ENCODE measurements at regions of chr4 and their contacts with region 1.

Region 1: DNA sequence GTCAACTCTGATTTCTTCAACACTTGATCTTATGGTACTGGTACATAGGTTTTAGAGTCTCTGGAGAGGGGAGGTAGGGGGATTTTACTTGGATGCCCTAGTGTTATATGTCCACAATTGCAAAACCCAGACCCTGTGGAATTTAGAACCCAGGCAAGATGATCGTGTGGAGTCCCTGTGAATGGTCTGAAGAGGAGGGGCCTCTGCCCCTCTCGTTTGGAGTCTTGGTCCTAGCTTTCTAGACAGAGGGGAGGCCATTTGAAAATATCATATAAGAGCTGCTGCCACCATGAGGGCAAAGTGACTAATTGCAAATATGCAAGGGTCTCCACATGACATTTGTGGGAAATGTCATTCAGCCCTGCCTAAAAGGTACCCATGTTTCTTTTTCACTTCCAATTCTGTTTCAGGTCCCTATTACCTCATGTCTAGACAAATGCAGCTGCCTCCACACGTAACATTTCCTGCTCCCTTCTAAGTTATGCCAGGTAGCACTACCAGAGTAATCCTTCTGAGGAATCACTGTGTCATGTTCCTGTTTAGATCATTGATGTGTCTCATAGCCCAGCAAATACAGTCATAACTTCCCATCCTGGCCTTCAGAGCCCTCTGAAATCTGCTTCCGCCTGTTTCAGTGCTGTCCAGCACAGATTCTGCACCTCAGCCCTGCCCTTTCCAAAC is 126.8 kb downstream of the KLHL8 start:
- DNase-seq: peak; percentile 57
- ATAC-seq: peak; percentile 90
- H3K4me3 Mint-ChIP-seq: no peak overlapping the region
- H3K27ac Mint-ChIP-seq: peak overlapping the region; percentile 36
- H3K4me1 Mint-ChIP-seq: peaks cover 29% of the 10 kb centered on the region
- H3K27me3 Mint-ChIP-seq: no peaks in the 10 kb centered on the region
- CTCF ChIP-seq: peak; percentile 69

Region 2: DNA sequence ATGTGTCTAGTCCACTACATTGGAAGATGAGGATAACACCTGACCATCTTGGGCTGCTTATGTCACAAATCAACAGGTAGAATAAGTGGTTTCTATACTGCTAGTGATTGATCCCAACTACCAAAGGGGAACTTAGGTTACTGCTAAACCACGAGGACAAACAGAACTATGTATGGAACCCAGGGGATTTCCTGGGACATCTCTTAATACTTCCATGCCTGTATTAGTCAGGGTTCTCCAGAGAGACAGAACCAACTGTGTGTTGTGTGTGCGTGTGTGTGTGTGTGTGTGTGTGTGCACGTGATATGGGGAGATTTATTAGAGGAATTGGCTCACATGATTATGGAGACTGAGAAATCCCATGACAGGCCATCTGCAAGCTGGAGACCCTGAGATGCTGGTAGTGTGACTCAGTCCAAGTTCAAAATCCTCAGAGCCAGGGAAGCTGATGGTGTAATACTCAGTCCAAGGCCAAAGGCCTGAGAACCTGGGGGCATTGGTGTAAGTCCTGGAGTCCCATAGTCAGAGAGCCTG is 175.0 kb before region 1 on chr4:
- CTCF ChIA-PET with region 1: interaction called, 140 read pairs
- POLR2A ChIA-PET with region 1: interaction called, 4 read pairs
- intact Hi-C with region 1: loop called (anchors 1 kb)
- DNase-seq: no peak
- ATAC-seq: no peak
- H3K4me3 Mint-ChIP-seq: no peak overlapping the region
- H3K27ac Mint-ChIP-seq: no peak overlapping the region
- H3K4me1 Mint-ChIP-seq: no peaks in the 10 kb centered on the region
- H3K27me3 Mint-ChIP-seq: no peaks in the 10 kb centered on the region
- CTCF ChIP-seq: no peak

Region 3: GRCh38 chr4:86934771-86935565 is 158.6 kb before region 1 on chr4 and contains the start of gene AFF1:
- CTCF ChIA-PET with region 1: interaction called, 18 read pairs
- POLR2A ChIA-PET with region 1: interaction called, 3 read pairs
- intact Hi-C with region 1: loop called (anchors 5 kb)
- DNase-seq: peak; percentile 92
- ATAC-seq: peak; percentile 83
- H3K4me3 Mint-ChIP-seq: peak within 1 kb of the TSS; percentile 90
- H3K27ac Mint-ChIP-seq: peak within 1 kb of the TSS; percentile 95
- H3K4me1 Mint-ChIP-seq: peaks cover 43% of the 10 kb centered on the region
- H3K27me3 Mint-ChIP-seq: no peaks in the 10 kb centered on the region
- CTCF ChIP-seq: peak; percentile 38
- total RNA-seq, gene AFF1: 40.3 to 45.4 TPM

Region 4: GRCh38 chr4:87006676-87007527 is 86.7 kb before region 1 on chr4:
- CTCF ChIA-PET with region 1: interaction called, 23 read pairs
- POLR2A ChIA-PET with region 1: interaction called, 5 read pairs
- intact Hi-C with region 1: loop called (anchors 5 kb)
- DNase-seq: peak; percentile 90
- ATAC-seq: peak; percentile 84
- H3K4me3 Mint-ChIP-seq: peak overlapping the region; percentile 90
- H3K27ac Mint-ChIP-seq: peak overlapping the region; percentile 93
- H3K4me1 Mint-ChIP-seq: peaks cover 47% of the 10 kb centered on the region
- H3K27me3 Mint-ChIP-seq: no peaks in the 10 kb centered on the region
- CTCF ChIP-seq: peak; percentile 49

Region 5: DNA sequence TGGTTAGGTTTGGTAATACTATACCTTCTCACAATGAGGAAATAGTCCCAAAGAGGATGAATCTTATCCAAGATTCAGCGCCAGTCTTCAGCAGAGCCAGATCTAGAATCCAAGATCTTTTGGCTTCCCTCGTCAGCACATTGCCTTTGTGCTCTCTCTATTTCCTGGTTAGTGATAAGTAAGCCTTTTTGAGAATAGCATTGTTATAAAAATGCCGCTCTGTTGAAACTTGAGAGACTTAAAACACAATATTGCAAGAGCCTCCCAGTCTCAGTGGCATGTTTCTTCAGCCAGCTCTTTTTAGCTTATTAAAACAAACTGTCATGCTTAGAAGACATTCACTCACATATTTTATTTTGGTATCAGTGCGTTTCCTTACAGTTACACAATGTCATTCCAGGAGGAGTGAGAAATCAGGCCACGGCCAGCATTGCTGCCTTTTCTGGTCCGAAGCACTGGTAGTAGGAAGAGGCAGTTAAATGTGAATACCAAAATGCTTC is 14.5 kb before region 1 on chr4:
- CTCF ChIA-PET with region 1: interaction called, 17 read pairs
- POLR2A ChIA-PET with region 1: interaction called, 3 read pairs
- intact Hi-C with region 1: no loop called
- DNase-seq: no peak
- ATAC-seq: no peak
- H3K4me3 Mint-ChIP-seq: no peak overlapping the region
- H3K27ac Mint-ChIP-seq: no peak overlapping the region
- H3K4me1 Mint-ChIP-seq: peaks cover 31% of the 10 kb centered on the region
- H3K27me3 Mint-ChIP-seq: no peaks in the 10 kb centered on the region
- CTCF ChIP-seq: no peak

Region 6: DNA sequence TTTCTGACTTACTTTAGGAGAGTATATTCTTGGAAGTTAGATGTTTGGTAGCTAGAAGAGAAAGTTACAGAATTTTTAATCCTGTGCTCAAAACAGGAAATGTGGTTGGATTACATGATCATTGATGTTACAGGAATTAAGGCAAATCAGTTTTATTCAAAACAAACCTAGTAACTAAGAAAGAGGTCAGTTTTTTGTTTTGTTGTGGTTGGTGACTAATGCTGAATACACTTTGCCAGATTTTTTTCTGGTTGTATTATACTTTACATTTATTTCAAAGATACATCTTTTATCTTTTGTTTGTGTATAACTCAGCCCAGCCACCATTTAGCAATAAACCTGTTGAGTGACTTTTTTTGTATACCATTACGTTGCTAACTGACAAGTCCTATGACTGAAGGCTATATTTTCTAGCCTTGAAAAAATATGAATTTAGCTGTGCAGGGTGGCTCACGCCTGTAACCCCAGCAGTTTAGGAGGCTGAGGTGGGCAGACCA is 10.2 kb after region 1 on chr4:
- CTCF ChIA-PET with region 1: interaction called, 10 read pairs
- POLR2A ChIA-PET with region 1: no interaction called
- intact Hi-C with region 1: no loop called
- DNase-seq: no peak
- ATAC-seq: peak; percentile 68
- H3K4me3 Mint-ChIP-seq: no peak overlapping the region
- H3K27ac Mint-ChIP-seq: peak overlapping the region; percentile 35
- H3K4me1 Mint-ChIP-seq: peaks cover 34% of the 10 kb centered on the region
- H3K27me3 Mint-ChIP-seq: no peaks in the 10 kb centered on the region
- CTCF ChIP-seq: no peak

Region 7: DNA sequence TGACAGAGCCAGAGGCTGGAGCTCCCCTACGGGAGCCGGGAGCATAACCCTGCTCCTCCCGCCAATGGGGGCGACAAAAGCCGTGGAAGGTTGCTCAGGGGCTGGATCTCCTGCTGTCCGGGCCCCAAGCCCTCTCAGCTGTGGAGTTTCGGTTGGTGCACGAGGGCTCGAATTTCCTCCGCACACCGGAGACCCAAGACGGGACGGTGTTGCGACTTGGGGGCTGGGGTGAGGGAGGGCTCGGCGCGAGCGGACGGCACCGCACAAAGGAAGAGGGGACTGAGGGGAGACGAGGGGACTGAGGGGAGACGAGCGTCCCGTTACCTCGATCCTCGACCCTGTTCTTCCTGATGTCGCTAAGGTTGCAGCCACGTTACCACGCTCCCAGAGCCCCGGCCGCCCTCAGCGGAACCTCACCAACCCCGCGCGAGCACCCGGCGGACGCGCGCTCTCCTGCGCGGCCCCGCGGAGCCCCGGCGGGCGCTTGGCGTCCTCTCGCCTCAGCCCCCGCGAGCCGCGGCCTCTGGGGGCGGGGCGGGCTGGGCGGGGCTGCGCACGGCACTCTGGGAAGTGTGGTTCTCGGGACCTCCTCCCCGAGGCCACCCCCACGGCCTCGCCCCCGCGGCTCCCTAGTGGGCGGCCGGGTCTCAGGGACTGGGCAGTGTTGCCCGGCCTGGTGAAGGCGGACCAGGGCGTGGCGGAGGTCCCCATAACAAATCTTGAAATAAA is 126.7 kb after region 1 on chr4 and contains the start of gene KLHL8:
- CTCF ChIA-PET with region 1: no interaction called
- POLR2A ChIA-PET with region 1: no interaction called
- intact Hi-C with region 1: no loop called
- DNase-seq: peak; percentile 87
- ATAC-seq: peak; percentile 93
- H3K4me3 Mint-ChIP-seq: peak within 1 kb of the TSS; percentile 91
- H3K27ac Mint-ChIP-seq: peak within 1 kb of the TSS; percentile 92
- H3K4me1 Mint-ChIP-seq: peaks cover 17% of the 10 kb centered on the region
- H3K27me3 Mint-ChIP-seq: no peaks in the 10 kb centered on the region
- CTCF ChIP-seq: no peak
- total RNA-seq, gene KLHL8: 12.0 to 12.5 TPM